Naive thymus-derived CD4-positive, alpha-beta T cell (primary cell): ENCODE measurements at regions of chr1 and their contacts with region 1.

Region 1: GRCh38 chr1:76154206-76154956 is 79.8 kb downstream of the ST6GALNAC3 start:
- DNase-seq: peak; percentile 68 to 84 (median 81)
- ATAC-seq: peak; percentile 95
- H3K4me3 ChIP-seq: peak overlapping the region; percentile 80
- H3K4me3 Mint-ChIP-seq: peak overlapping the region; percentile 82 to 96 (median 92)
- H3K27ac ChIP-seq: peak overlapping the region; percentile 46
- H3K27ac Mint-ChIP-seq: peak overlapping the region; percentile 39 to 94 (median 90)
- H3K4me1 ChIP-seq: peaks cover 0 to 3% of the 10 kb centered on the region in 2 donors
- H3K4me1 Mint-ChIP-seq: peaks cover 7 to 15% (median 10%) of the 10 kb centered on the region in 7 donors
- H3K27me3 ChIP-seq: no peaks in the 10 kb centered on the region
- H3K27me3 Mint-ChIP-seq: peaks cover 0 to 9% (median 0%) of the 10 kb centered on the region in 5 donors

Region 2: GRCh38 chr1:76285578-76286135 is 131.3 kb after region 1 on chr1:
- CTCF ChIA-PET with region 1: interaction called, 3 read pairs
- POLR2A ChIA-PET with region 1: no interaction called
- intact Hi-C with region 1: loop called in 1 of 2 experiments (anchors 5 kb)
- DNase-seq: peak in 5 of 9 donors; percentile 30 to 51 (median 37)
- ATAC-seq: peak; percentile 54
- H3K4me3 ChIP-seq: no peak overlapping the region
- H3K4me3 Mint-ChIP-seq: peak overlapping the region in 9 of 10 donors; percentile 15 to 75 (median 59)
- H3K27ac ChIP-seq: peak overlapping the region; percentile 6
- H3K27ac Mint-ChIP-seq: peak overlapping the region; percentile 33 to 95 (median 70)
- H3K4me1 ChIP-seq: peaks cover 8 to 54% of the 10 kb centered on the region in 2 donors
- H3K4me1 Mint-ChIP-seq: peaks cover 16 to 92% (median 64%) of the 10 kb centered on the region in 7 donors
- H3K27me3 ChIP-seq: no peaks in the 10 kb centered on the region
- H3K27me3 Mint-ChIP-seq: no peaks in the 10 kb centered on the region

Region 3: GRCh38 chr1:76501586-76502219 is 347.3 kb after region 1 on chr1:
- CTCF ChIA-PET with region 1: interaction called, 3 read pairs
- POLR2A ChIA-PET with region 1: no interaction called
- intact Hi-C with region 1: loop called in 1 of 2 experiments (anchors 10 kb)
- DNase-seq: peak in 5 of 9 donors; percentile 7 to 28 (median 19)
- ATAC-seq: no peak
- H3K4me3 ChIP-seq: no peak overlapping the region
- H3K4me3 Mint-ChIP-seq: peak overlapping the region in 8 of 10 donors; percentile 30 to 64 (median 59)
- H3K27ac ChIP-seq: no peak overlapping the region
- H3K27ac Mint-ChIP-seq: peak overlapping the region in 5 of 9 donors; percentile 14 to 72 (median 38)
- H3K4me1 ChIP-seq: peaks cover 0 to 13% of the 10 kb centered on the region in 2 donors
- H3K4me1 Mint-ChIP-seq: peaks cover 6 to 20% (median 16%) of the 10 kb centered on the region in 7 donors
- H3K27me3 ChIP-seq: no peaks in the 10 kb centered on the region
- H3K27me3 Mint-ChIP-seq: no peaks in the 10 kb centered on the region

Region 4: GRCh38 chr1:76682138-76682537 is 527.8 kb after region 1 on chr1:
- CTCF ChIA-PET with region 1: no interaction called
- POLR2A ChIA-PET with region 1: no interaction called
- intact Hi-C with region 1: loop called in 1 of 2 experiments (anchors 5 kb)
- DNase-seq: no peak
- ATAC-seq: no peak
- H3K4me3 ChIP-seq: no peak overlapping the region
- H3K4me3 Mint-ChIP-seq: no peak overlapping the region
- H3K27ac ChIP-seq: no peak overlapping the region
- H3K27ac Mint-ChIP-seq: no peak overlapping the region
- H3K4me1 ChIP-seq: no peaks in the 10 kb centered on the region
- H3K4me1 Mint-ChIP-seq: no peaks in the 10 kb centered on the region
- H3K27me3 ChIP-seq: no peaks in the 10 kb centered on the region
- H3K27me3 Mint-ChIP-seq: no peaks in the 10 kb centered on the region

Region 5: GRCh38 chr1:76901158-76901767 is 746.9 kb after region 1 on chr1:
- CTCF ChIA-PET with region 1: no interaction called
- POLR2A ChIA-PET with region 1: no interaction called
- intact Hi-C with region 1: loop called (anchors 1 kb)
- DNase-seq: peak in 6 of 9 donors; percentile 4 to 41 (median 30)
- ATAC-seq: peak; percentile 53
- H3K4me3 ChIP-seq: no peak overlapping the region
- H3K4me3 Mint-ChIP-seq: no peak overlapping the region
- H3K27ac ChIP-seq: no peak overlapping the region
- H3K27ac Mint-ChIP-seq: no peak overlapping the region
- H3K4me1 ChIP-seq: no peaks in the 10 kb centered on the region
- H3K4me1 Mint-ChIP-seq: no peaks in the 10 kb centered on the region
- H3K27me3 ChIP-seq: no peaks in the 10 kb centered on the region
- H3K27me3 Mint-ChIP-seq: peaks cover 0 to 7% (median 0%) of the 10 kb centered on the region in 5 donors

Region 6: GRCh38 chr1:77533660-77534305 is 1379.4 kb after region 1 on chr1:
- CTCF ChIA-PET with region 1: interaction called, 6 read pairs
- POLR2A ChIA-PET with region 1: no interaction called
- intact Hi-C with region 1: loop called (anchors 1 kb)
- DNase-seq: peak; percentile 34 to 75 (median 60)
- ATAC-seq: peak; percentile 71
- H3K4me3 ChIP-seq: no peak overlapping the region
- H3K4me3 Mint-ChIP-seq: peak overlapping the region in 6 of 10 donors; percentile 22 to 69 (median 50)
- H3K27ac ChIP-seq: no peak overlapping the region
- H3K27ac Mint-ChIP-seq: peak overlapping the region in 8 of 9 donors; percentile 16 to 94 (median 38)
- H3K4me1 ChIP-seq: peaks cover 0 to 4% of the 10 kb centered on the region in 2 donors
- H3K4me1 Mint-ChIP-seq: peaks cover 2 to 16% (median 10%) of the 10 kb centered on the region in 7 donors
- H3K27me3 ChIP-seq: no peaks in the 10 kb centered on the region
- H3K27me3 Mint-ChIP-seq: no peaks in the 10 kb centered on the region